ENCODE measurements at regions of chr10 and their contacts with region 1.

Region 1: GRCh38 chr10:98425511-98426352 is 10.8 kb upstream of the PYROXD2 start:
- DNase-seq: peak; percentile 46
- H3K4me3 ChIP-seq: no peak overlapping the region
- H3K27ac ChIP-seq: no peak overlapping the region
- H3K4me1 ChIP-seq: no peaks in the 10 kb centered on the region
- H3K27me3 ChIP-seq: no peaks in the 10 kb centered on the region
- CTCF ChIP-seq: peak; percentile 79 to 80
- POLR2A ChIP-seq: no peak

Region 2: DNA sequence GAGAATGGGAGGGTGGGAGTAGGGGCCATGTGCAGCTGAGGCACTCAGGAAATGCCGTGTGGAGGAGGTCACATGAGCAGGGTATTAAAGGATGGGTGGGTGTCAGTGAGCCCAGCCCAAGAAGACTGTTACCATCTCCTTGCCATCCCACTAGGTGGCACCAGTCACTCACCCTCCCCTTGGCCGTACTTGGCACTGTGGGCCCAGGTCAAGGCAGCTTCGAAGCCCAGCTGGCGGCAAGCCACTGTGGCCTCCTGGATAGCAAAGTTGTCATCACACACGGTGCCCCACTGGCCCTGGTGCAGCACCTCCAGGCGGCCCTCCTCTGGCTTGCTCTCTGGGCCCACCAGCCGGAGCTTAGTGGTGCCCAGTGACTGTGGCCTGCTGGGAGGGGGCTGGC is 163.2 kb before region 1 on chr10:
- CTCF ChIA-PET with region 1: interaction called, 4 read pairs
- POLR2A ChIA-PET with region 1: no interaction called
- dilution Hi-C with region 1: no loop called
- intact Hi-C with region 1: loop called (anchors 2 kb)
- DNase-seq: peak; percentile 38
- H3K4me3 ChIP-seq: no peak overlapping the region
- H3K27ac ChIP-seq: no peak overlapping the region
- H3K4me1 ChIP-seq: no peaks in the 10 kb centered on the region
- H3K27me3 ChIP-seq: no peaks in the 10 kb centered on the region
- CTCF ChIP-seq: peak; percentile 38 to 60
- POLR2A ChIP-seq: no peak

Region 3: GRCh38 chr10:98414932-98415730 is 10.6 kb before region 1 on chr10 and contains the start of gene PYROXD2:
- CTCF ChIA-PET with region 1: interaction called, 16 read pairs
- POLR2A ChIA-PET with region 1: no interaction called
- dilution Hi-C with region 1: no loop called
- intact Hi-C with region 1: no loop called
- DNase-seq: peak; percentile 88
- H3K4me3 ChIP-seq: peak within 1 kb of the TSS; percentile 6 to 65 (median 61)
- H3K27ac ChIP-seq: no peak within 1 kb of the TSS
- H3K4me1 ChIP-seq: peaks cover 14% of the 10 kb centered on the region
- H3K27me3 ChIP-seq: no peaks in the 10 kb centered on the region
- CTCF ChIP-seq: no peak
- POLR2A ChIP-seq: peak; percentile 96
- total RNA-seq, gene PYROXD2: 7.0 TPM in 2 replicates

Region 4: DNA sequence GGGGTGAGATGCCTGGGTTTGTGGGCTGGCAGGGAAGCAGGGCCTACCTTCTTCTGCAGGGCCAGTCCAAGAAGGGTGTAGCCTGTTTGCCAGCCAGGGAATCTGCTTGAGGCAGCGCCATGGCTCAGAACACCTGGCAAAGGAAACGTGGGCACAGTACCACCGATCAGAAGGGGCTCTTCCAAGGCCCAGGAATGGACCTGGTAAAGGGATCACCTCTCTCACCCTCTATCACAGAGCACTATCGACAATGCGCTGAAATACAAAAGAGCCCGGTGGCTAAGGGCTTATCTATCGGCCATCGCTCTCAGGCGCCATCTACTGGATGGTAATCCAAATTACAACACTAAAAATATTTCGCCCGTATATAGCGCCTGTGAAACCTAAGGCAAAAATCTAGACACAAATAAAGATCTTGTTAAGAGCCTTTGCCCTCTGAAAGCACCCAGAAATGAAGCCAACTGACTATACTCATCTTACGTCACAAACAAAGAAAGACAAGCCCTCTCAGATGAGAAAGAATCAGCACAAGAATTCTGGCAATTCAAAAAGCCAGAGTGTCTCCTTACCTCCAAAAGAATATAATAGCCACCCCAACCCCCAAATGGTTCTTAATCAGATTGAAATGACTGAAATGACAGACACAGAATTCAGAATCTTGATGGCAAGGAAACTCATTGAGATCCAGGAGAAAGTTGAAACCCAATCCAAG is 238.8 kb after region 1 on chr10:
- CTCF ChIA-PET with region 1: no interaction called
- POLR2A ChIA-PET with region 1: no interaction called
- dilution Hi-C with region 1: no loop called
- intact Hi-C with region 1: loop called (anchors 1 kb)
- DNase-seq: peak; percentile 18
- H3K4me3 ChIP-seq: no peak overlapping the region
- H3K27ac ChIP-seq: no peak overlapping the region
- H3K4me1 ChIP-seq: no peaks in the 10 kb centered on the region
- H3K27me3 ChIP-seq: peaks cover 0 to 1% of the 10 kb centered on the region in 2 experiments
- CTCF ChIP-seq: peak; percentile 64 to 70
- POLR2A ChIP-seq: no peak

Region 5: DNA sequence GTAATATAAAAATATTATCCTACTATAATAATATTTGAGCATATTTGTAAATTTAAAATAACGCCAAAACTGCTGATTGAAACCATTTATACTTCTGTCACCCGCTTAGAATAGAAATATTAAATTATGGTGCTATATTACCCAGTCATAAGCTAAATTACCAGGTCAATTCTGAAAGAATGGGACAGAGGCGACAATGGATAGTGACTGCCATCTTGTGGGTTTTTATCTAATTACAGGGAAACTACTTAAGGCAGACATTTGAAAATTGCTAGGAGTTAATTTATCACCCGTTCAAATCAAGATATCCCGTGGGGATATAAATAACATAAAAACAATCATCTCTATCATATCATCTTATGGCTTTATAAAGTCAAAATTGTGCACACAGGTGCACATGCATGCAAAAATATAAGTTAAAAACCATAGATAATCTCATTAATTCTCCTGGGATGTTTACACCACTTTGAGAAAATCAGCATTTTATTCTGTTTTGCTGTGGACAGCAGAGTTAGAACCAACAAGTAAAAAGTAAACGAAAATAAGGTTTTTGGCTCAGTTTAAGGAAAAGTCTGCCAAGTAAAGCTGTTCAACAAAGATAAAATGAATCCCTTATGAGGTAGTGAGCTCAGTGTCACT is 851.2 kb after region 1 on chr10:
- CTCF ChIA-PET with region 1: interaction called, 10 read pairs
- POLR2A ChIA-PET with region 1: no interaction called
- dilution Hi-C with region 1: no loop called
- intact Hi-C with region 1: no loop called
- DNase-seq: peak; percentile 30
- H3K4me3 ChIP-seq: no peak overlapping the region
- H3K27ac ChIP-seq: no peak overlapping the region
- H3K4me1 ChIP-seq: no peaks in the 10 kb centered on the region
- H3K27me3 ChIP-seq: no peaks in the 10 kb centered on the region
- CTCF ChIP-seq: peak; percentile 18 to 19
- POLR2A ChIP-seq: no peak